ENCODE measurements at regions of chr5 and their contacts with region 1.

Region 1: GRCh38 chr5:116652196-116652729 is 77.6 kb upstream of the SEMA6A start:
- DNase-seq: peak; percentile 85
- ATAC-seq: peak; percentile 96
- H3K4me3 ChIP-seq: no peak overlapping the region
- H3K27ac ChIP-seq: no peak overlapping the region; the same call in 1 of the 2 replicates
- H3K4me1 ChIP-seq: peaks cover 12% of the 10 kb centered on the region
- H3K27me3 ChIP-seq: no peaks in the 10 kb centered on the region
- CTCF ChIP-seq: no peak
- EP300 ChIP-seq: peak; percentile 81 to 90; a peak in 3 of 4 replicates
- POLR2A ChIP-seq: no peak
- RAD21 ChIP-seq: no peak

Region 2: DNA sequence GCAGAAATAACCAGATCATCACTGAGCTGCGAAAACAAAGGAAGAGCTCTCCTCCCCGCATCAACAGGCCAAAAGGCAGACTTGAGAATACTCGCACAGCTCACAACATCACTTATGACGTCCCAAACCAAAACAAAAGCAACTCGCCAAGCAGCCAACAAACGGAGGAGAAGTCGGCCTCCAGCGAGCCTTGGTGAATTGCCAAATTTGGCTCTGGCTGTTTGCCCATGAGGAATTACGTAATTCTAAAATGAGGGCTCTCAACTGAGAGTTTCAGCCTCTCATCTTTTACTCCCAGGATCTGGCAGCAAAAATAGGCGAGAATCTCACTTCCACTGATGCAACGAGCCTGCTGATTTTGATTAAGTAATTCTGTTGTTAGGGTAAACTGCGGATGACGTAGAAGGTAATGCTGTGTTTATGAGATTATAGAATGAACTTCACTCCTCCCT is 26.0 kb before region 1 on chr5:
- CTCF ChIA-PET with region 1: interaction called, 6 read pairs
- POLR2A ChIA-PET with region 1: interaction called, 6 read pairs
- RAD21 ChIA-PET with region 1: interaction called, 11 read pairs
- SMC1A ChIA-PET with region 1: interaction called, 34 read pairs
- in situ Hi-C with region 1: no loop called
- intact Hi-C with region 1: no loop called
- DNase-seq: no peak
- ATAC-seq: no peak
- H3K4me3 ChIP-seq: no peak overlapping the region
- H3K27ac ChIP-seq: no peak overlapping the region
- H3K4me1 ChIP-seq: peaks cover 6% of the 10 kb centered on the region
- H3K27me3 ChIP-seq: no peaks in the 10 kb centered on the region
- CTCF ChIP-seq: no peak
- EP300 ChIP-seq: no peak
- POLR2A ChIP-seq: no peak
- RAD21 ChIP-seq: no peak

Region 3: GRCh38 chr5:116640236-116640635 is 12.0 kb before region 1 on chr5:
- CTCF ChIA-PET with region 1: interaction called, 9 read pairs
- POLR2A ChIA-PET with region 1: interaction called, 5 read pairs
- RAD21 ChIA-PET with region 1: interaction called, 9 read pairs
- SMC1A ChIA-PET with region 1: interaction called, 58 read pairs
- in situ Hi-C with region 1: no loop called
- intact Hi-C with region 1: no loop called
- DNase-seq: no peak
- ATAC-seq: no peak
- H3K4me3 ChIP-seq: no peak overlapping the region
- H3K27ac ChIP-seq: no peak overlapping the region
- H3K4me1 ChIP-seq: no peaks in the 10 kb centered on the region
- H3K27me3 ChIP-seq: no peaks in the 10 kb centered on the region
- CTCF ChIP-seq: no peak
- EP300 ChIP-seq: no peak
- POLR2A ChIP-seq: no peak
- RAD21 ChIP-seq: no peak

Region 4: GRCh38 chr5:116702776-116703175 is 50.5 kb after region 1 on chr5:
- CTCF ChIA-PET with region 1: interaction called, 4 read pairs
- POLR2A ChIA-PET with region 1: no interaction called
- RAD21 ChIA-PET with region 1: interaction called, 22 read pairs
- SMC1A ChIA-PET with region 1: interaction called, 25 read pairs
- in situ Hi-C with region 1: no loop called
- intact Hi-C with region 1: loop called (anchors 5 kb)
- DNase-seq: no peak
- ATAC-seq: peak; percentile 72
- H3K4me3 ChIP-seq: no peak overlapping the region
- H3K27ac ChIP-seq: peak overlapping the region; percentile 31
- H3K4me1 ChIP-seq: peaks cover 26% of the 10 kb centered on the region
- H3K27me3 ChIP-seq: no peaks in the 10 kb centered on the region
- CTCF ChIP-seq: no peak
- EP300 ChIP-seq: peak in 1 of 2 experiments; percentile 66; a peak in 1 of 4 replicates
- POLR2A ChIP-seq: no peak
- RAD21 ChIP-seq: no peak

Region 5: GRCh38 chr5:116709082-116709481 is 56.8 kb after region 1 on chr5:
- CTCF ChIA-PET with region 1: interaction called, 4 read pairs
- POLR2A ChIA-PET with region 1: no interaction called
- RAD21 ChIA-PET with region 1: interaction called, 22 read pairs
- SMC1A ChIA-PET with region 1: interaction called, 25 read pairs
- in situ Hi-C with region 1: no loop called
- intact Hi-C with region 1: loop called (anchors 5 kb)
- DNase-seq: peak; percentile 60
- ATAC-seq: peak; percentile 68
- H3K4me3 ChIP-seq: no peak overlapping the region; the same call in 1 of the 2 replicates
- H3K27ac ChIP-seq: no peak overlapping the region
- H3K4me1 ChIP-seq: peaks cover 25% of the 10 kb centered on the region
- H3K27me3 ChIP-seq: no peaks in the 10 kb centered on the region
- CTCF ChIP-seq: no peak
- EP300 ChIP-seq: no peak
- POLR2A ChIP-seq: no peak
- RAD21 ChIP-seq: no peak

Region 6: GRCh38 chr5:116959843-116960242 is 307.6 kb after region 1 on chr5:
- CTCF ChIA-PET with region 1: no interaction called
- POLR2A ChIA-PET with region 1: no interaction called
- RAD21 ChIA-PET with region 1: no interaction called
- SMC1A ChIA-PET with region 1: no interaction called
- in situ Hi-C with region 1: no loop called
- intact Hi-C with region 1: no loop called
- DNase-seq: no peak
- ATAC-seq: no peak; the same call in 2 of the 3 replicates
- H3K4me3 ChIP-seq: no peak overlapping the region
- H3K27ac ChIP-seq: no peak overlapping the region
- H3K4me1 ChIP-seq: no peaks in the 10 kb centered on the region
- H3K27me3 ChIP-seq: no peaks in the 10 kb centered on the region; a peak in 2 of 4 replicates
- CTCF ChIP-seq: no peak
- EP300 ChIP-seq: no peak
- POLR2A ChIP-seq: no peak
- RAD21 ChIP-seq: no peak

Region 7: GRCh38 chr5:118060833-118061232 is 1408.6 kb after region 1 on chr5:
- CTCF ChIA-PET with region 1: no interaction called
- POLR2A ChIA-PET with region 1: no interaction called
- RAD21 ChIA-PET with region 1: no interaction called
- SMC1A ChIA-PET with region 1: no interaction called
- in situ Hi-C with region 1: no loop called
- intact Hi-C with region 1: no loop called
- DNase-seq: no peak
- ATAC-seq: no peak
- H3K4me3 ChIP-seq: no peak overlapping the region
- H3K27ac ChIP-seq: no peak overlapping the region
- H3K4me1 ChIP-seq: no peaks in the 10 kb centered on the region
- H3K27me3 ChIP-seq: no peaks in the 10 kb centered on the region
- CTCF ChIP-seq: no peak; a peak in 1 of 6 replicates
- EP300 ChIP-seq: no peak
- POLR2A ChIP-seq: no peak
- RAD21 ChIP-seq: 0 out of 2 replicates have a peak, but pooled peaks have one; percentile 11

Measured in GM12878 (cell line).